ENCODE measurements at regions of chr14 and their contacts with region 1.

Region 1: GRCh38 chr14:91350813-91351511 is 66.7 kb downstream of the CCDC88C start:
- DNase-seq: peak; percentile 83
- H3K4me3 Mint-ChIP-seq: peak overlapping the region; percentile 63
- H3K27ac Mint-ChIP-seq: peak overlapping the region; percentile 93
- H3K4me1 Mint-ChIP-seq: peaks cover 94% of the 10 kb centered on the region
- H3K27me3 Mint-ChIP-seq: no peaks in the 10 kb centered on the region

Region 2: DNA sequence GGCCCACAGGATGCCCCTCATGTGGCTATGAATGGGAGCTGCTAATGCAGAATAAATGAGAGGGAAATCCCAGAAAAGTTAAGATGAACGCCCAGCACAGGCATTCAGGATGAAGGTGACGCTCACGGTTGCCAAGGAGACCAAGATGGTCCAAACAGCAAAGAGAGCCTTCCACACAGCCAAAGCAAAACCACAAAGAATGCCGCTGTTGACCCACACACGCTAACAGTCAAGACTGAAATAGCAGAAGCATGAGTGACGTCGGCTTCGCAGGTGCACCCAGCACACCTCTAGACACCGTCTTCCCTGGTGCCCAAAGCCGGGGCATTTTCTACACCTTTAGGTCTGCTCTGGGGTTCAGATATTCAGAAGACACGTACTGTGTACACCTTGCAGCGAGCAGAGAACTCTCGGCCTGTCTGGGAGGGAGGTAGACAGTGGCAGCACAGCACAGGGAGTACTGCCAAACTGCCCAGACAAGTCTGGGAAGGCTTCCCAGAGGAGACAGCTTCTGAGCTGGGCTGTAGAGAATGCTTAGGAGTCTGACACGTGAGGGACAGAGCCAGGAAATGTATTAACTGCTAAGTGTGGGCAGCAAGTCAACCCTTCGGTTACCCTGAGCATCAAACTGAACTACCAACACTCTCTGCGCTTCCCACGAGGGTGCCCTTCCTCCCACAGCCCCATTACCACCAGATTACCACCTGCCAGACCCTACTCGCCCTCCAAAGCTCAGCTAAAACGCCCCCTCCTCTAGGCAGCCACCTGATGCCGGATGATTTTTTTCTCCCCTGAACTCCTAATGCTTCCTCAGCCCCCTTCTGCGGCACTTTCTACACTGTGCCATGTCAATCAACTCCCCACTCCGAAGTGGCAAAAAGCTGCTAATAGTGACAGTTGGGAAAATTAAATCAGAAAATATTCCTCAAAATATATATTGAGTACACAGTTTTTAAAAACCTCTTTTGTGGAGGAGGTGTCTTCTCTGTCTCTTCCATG is 16.5 kb after region 1 on chr14:
- CTCF ChIA-PET with region 1: interaction called, 40 read pairs
- DNase-seq: peak; percentile 65
- H3K4me3 Mint-ChIP-seq: peak overlapping the region; percentile 24
- H3K27ac Mint-ChIP-seq: peak overlapping the region; percentile 57
- H3K4me1 Mint-ChIP-seq: peaks cover 83% of the 10 kb centered on the region
- H3K27me3 Mint-ChIP-seq: no peaks in the 10 kb centered on the region

Region 3: GRCh38 chr14:91373591-91374254 is 22.8 kb after region 1 on chr14:
- CTCF ChIA-PET with region 1: interaction called, 40 read pairs
- DNase-seq: peak; percentile 71
- H3K4me3 Mint-ChIP-seq: peak overlapping the region; percentile 72
- H3K27ac Mint-ChIP-seq: peak overlapping the region; percentile 95
- H3K4me1 Mint-ChIP-seq: peaks cover 100% of the 10 kb centered on the region
- H3K27me3 Mint-ChIP-seq: no peaks in the 10 kb centered on the region

Region 4: GRCh38 chr14:91396959-91397815 is 46.2 kb after region 1 on chr14:
- CTCF ChIA-PET with region 1: interaction called, 10 read pairs
- DNase-seq: peak; percentile 87
- H3K4me3 Mint-ChIP-seq: peak overlapping the region; percentile 72
- H3K27ac Mint-ChIP-seq: peak overlapping the region; percentile 90
- H3K4me1 Mint-ChIP-seq: peaks cover 93% of the 10 kb centered on the region
- H3K27me3 Mint-ChIP-seq: no peaks in the 10 kb centered on the region

Region 5: GRCh38 chr14:91418387-91419043 is 67.6 kb after region 1 on chr14:
- CTCF ChIA-PET with region 1: interaction called, 10 read pairs
- DNase-seq: peak; percentile 84
- H3K4me3 Mint-ChIP-seq: peak overlapping the region; percentile 69
- H3K27ac Mint-ChIP-seq: peak overlapping the region; percentile 91
- H3K4me1 Mint-ChIP-seq: peaks cover 35% of the 10 kb centered on the region
- H3K27me3 Mint-ChIP-seq: peaks cover 11% of the 10 kb centered on the region

Region 6: GRCh38 chr14:91580876-91581577 is 230.1 kb after region 1 on chr14:
- CTCF ChIA-PET with region 1: no interaction called
- DNase-seq: no peak
- H3K4me3 Mint-ChIP-seq: no peak overlapping the region
- H3K27ac Mint-ChIP-seq: no peak overlapping the region
- H3K4me1 Mint-ChIP-seq: no peaks in the 10 kb centered on the region
- H3K27me3 Mint-ChIP-seq: peaks cover 2% of the 10 kb centered on the region

Measured in activated naive CD4-positive, alpha-beta T cell treated with anti-CD3 and anti-CD28 coated beads, Interleukin-2, amount 10 ng/mL, durations not matched to agents 7 days and 5 days (primary cell).